ENCODE measurements at regions of chr1 and their contacts with region 1.

Region 1: DNA sequence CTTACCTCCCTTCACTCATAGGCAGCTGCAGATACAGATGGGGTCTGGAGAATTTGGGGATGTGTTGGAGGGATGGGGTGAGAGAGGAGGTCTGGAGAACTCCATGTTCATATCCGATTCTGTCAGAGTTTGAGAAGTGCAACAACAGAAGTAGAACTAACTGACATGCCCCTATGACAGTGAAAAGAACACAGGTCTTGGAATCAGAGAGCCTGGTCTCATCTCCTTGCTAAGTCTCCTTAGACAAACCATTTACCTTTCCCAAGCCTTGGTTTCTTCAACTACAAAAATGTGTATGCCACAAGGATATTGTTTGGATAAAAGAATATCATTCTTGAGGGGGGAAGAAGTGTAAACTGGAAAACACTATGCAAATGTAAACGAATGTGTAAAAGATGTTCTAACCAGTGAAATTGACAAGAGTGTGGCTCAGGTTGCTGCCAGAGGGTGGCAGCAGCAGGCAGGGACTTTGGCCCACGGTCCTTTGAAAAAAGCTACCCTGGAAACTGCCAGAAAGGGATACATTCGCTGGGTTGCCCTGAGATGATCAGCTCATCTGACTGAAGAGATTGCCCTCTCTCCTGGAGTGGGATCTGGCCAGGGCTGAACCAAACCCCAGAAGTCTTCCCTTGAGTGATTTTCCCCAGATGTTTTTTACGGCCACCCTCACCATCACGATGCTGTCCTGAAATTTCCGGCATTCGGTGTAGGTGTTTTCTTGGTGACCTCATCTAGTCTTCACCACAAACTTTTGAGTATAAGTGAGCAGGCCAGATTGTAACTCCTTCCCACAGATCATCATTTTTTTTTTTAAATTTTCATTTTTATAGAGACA is 17.0 kb upstream of the CD2 start:
- DNase-seq: peak; percentile 70
- H3K4me3 Mint-ChIP-seq: peak overlapping the region; percentile 66
- H3K27ac Mint-ChIP-seq: peak overlapping the region; percentile 99
- H3K4me1 Mint-ChIP-seq: peaks cover 79% of the 10 kb centered on the region
- H3K27me3 Mint-ChIP-seq: no peaks in the 10 kb centered on the region

Region 2: DNA sequence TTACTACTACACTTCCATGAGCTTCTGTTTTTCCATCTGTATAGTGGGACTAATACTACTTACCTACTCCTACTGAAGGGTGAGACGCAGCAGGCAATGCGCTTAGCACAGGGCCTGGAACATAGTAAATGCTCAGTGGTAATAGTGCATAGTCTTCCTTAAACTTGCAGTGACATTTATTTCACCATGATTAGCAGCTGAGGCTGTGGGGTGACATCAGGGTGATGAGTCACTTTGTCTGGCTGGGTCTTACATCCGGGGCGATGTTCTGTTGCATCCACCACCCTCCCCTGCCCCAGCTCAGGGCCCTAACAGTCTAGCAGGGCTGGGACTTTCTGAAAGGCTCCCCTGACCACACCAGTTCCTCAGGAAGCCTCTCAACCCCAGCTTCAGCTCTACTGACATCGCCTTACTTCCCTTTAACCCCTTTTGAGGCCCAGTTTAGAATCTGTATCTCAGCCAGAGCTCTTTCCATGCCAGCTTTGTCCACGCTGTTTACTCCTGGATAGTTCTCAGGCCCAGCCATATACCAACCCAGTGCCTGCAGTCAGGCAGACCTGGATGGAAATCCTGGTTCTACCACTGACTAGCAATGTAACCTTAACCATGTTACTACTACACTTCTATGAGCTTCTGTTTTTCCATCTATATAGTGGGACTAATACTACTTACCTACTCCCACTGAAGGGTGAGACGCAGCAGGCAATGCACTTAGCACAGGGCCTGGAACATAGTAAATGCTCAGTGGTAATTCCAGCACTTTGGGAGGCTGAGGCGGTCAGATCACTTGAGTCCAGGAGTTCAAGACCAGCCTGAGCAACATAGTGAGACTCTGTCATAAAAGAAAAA is 232.7 kb before region 1 on chr1:
- intact Hi-C with region 1: loop called (anchors 5 kb)
- DNase-seq: peak; percentile 86
- H3K4me3 Mint-ChIP-seq: peak overlapping the region; percentile 3
- H3K27ac Mint-ChIP-seq: peak overlapping the region; percentile 88
- H3K4me1 Mint-ChIP-seq: peaks cover 91% of the 10 kb centered on the region
- H3K27me3 Mint-ChIP-seq: no peaks in the 10 kb centered on the region

Region 3: GRCh38 chr1:116754198-116754977 is 17.2 kb after region 1 on chr1 and contains the start of gene CD2:
- intact Hi-C with region 1: loop called (anchors 1 kb)
- DNase-seq: peak; percentile 61
- H3K4me3 Mint-ChIP-seq: peak within 1 kb of the TSS; percentile 97
- H3K27ac Mint-ChIP-seq: peak within 1 kb of the TSS; percentile 97
- H3K4me1 Mint-ChIP-seq: peaks cover 46% of the 10 kb centered on the region
- H3K27me3 Mint-ChIP-seq: no peaks in the 10 kb centered on the region
- total RNA-seq, gene CD2: 651 and 685 TPM in 2 replicates

Region 4: GRCh38 chr1:116777831-116778830 is 40.9 kb after region 1 on chr1:
- intact Hi-C with region 1: no loop called
- DNase-seq: no peak
- H3K4me3 Mint-ChIP-seq: peak overlapping the region; percentile 54
- H3K27ac Mint-ChIP-seq: peak overlapping the region; percentile 83
- H3K4me1 Mint-ChIP-seq: peaks cover 37% of the 10 kb centered on the region
- H3K27me3 Mint-ChIP-seq: no peaks in the 10 kb centered on the region

Region 5: DNA sequence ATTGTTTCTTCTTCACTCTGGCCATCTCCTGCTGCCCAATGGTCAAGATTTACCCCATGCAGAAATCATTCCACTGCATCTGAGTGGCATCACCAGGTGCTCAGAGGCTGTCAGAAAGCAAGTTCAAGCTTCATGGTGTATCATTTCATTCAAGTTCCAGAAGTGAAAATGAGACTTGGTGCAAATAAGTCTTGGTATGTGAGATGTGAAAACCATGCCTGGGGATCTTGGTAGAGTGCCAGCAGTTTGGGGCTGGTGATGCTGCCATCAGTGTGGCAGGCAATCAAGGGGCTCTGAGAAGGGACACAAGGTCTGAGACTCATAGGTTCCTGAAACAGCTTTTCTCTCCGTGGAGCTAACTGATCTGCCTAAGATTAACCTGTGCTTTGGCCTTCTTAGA is 69.0 kb after region 1 on chr1:
- intact Hi-C with region 1: no loop called
- DNase-seq: peak; percentile 40
- H3K4me3 Mint-ChIP-seq: peak overlapping the region; percentile 71
- H3K27ac Mint-ChIP-seq: peak overlapping the region; percentile 94
- H3K4me1 Mint-ChIP-seq: peaks cover 93% of the 10 kb centered on the region
- H3K27me3 Mint-ChIP-seq: no peaks in the 10 kb centered on the region

Region 6: GRCh38 chr1:116817582-116818064 is 80.4 kb after region 1 on chr1:
- intact Hi-C with region 1: loop called (anchors 1 kb)
- DNase-seq: peak; percentile 55
- H3K4me3 Mint-ChIP-seq: peak overlapping the region; percentile 56
- H3K27ac Mint-ChIP-seq: peak overlapping the region; percentile 56
- H3K4me1 Mint-ChIP-seq: peaks cover 59% of the 10 kb centered on the region
- H3K27me3 Mint-ChIP-seq: no peaks in the 10 kb centered on the region

Region 7: GRCh38 chr1:116934586-116935207 is 197.5 kb after region 1 on chr1:
- intact Hi-C with region 1: loop called (anchors 1 kb)
- DNase-seq: no peak
- H3K4me3 Mint-ChIP-seq: peak overlapping the region; percentile 25
- H3K27ac Mint-ChIP-seq: peak overlapping the region; percentile 75
- H3K4me1 Mint-ChIP-seq: peaks cover 27% of the 10 kb centered on the region
- H3K27me3 Mint-ChIP-seq: no peaks in the 10 kb centered on the region

Region 8: DNA sequence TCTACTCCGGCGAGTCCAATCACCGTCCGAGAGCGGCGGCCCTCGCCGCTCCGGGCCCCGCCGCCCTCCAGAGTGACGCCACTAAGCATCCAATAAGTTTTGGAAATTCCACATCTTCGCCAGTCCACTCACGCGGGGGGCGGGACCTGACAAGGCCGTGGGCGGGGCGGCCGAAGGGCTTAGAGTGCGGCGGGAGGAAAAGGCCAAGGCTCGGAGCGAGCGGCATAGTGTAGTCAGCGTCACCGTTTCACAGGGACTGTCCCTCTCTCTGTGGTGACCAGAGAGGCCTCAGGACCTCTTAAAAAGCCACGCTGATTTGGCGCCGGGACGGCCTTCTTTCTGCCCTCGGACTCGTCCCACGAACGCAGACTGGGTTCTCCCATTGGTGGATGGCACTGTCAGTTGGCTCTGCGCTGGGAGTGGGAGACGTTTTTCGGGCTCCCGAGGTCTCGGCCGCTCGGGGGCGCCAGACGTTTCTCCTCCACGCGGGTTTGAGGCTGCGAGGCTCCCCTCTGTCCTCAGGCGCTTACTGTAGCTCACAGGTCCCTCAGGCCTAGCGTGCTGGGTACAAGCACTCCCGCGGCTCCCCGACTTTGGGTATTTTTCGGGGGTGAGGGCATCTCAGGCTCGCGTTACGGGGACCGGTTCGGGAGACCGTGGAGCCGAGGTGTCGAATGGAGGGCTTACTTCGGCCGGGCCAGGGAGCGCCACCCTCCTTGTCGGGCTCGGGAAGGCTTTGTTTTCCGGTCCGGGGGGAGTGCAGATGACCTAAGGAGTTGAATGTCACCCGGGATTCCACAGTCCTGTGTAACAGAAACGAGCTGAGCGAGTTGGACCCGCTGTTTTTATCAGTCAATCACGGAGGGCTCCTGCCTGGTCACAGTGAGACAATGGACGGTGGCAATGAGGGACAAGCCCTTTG is 384.8 kb after region 1 on chr1:
- intact Hi-C with region 1: loop called (anchors 5 kb)
- DNase-seq: peak; percentile 79
- H3K4me3 Mint-ChIP-seq: peak overlapping the region; percentile 84
- H3K27ac Mint-ChIP-seq: peak overlapping the region; percentile 46
- H3K4me1 Mint-ChIP-seq: peaks cover 7% of the 10 kb centered on the region
- H3K27me3 Mint-ChIP-seq: peaks cover 9% of the 10 kb centered on the region